Activated naive CD8-positive, alpha-beta T cell treated with anti-CD3 and anti-CD28 coated beads, Interleukin-2, amount 10 ng/mL, durations not matched to agents 7 days and 5 days (primary cell): ENCODE measurements at regions of chr10 and their contacts with region 1.

Region 1: GRCh38 chr10:96129387-96130325 is at the start of gene ZNF518A:
- DNase-seq: peak; percentile 90
- ATAC-seq: peak; percentile 86
- H3K4me3 Mint-ChIP-seq: peak within 1 kb of the TSS; percentile 96
- H3K27ac Mint-ChIP-seq: peak within 1 kb of the TSS; percentile 98
- H3K4me1 Mint-ChIP-seq: peaks cover 22% of the 10 kb centered on the region
- H3K27me3 Mint-ChIP-seq: peaks cover 34% of the 10 kb centered on the region
- total RNA-seq, gene ZNF518A: 22.0 to 22.7 TPM

Region 2: DNA sequence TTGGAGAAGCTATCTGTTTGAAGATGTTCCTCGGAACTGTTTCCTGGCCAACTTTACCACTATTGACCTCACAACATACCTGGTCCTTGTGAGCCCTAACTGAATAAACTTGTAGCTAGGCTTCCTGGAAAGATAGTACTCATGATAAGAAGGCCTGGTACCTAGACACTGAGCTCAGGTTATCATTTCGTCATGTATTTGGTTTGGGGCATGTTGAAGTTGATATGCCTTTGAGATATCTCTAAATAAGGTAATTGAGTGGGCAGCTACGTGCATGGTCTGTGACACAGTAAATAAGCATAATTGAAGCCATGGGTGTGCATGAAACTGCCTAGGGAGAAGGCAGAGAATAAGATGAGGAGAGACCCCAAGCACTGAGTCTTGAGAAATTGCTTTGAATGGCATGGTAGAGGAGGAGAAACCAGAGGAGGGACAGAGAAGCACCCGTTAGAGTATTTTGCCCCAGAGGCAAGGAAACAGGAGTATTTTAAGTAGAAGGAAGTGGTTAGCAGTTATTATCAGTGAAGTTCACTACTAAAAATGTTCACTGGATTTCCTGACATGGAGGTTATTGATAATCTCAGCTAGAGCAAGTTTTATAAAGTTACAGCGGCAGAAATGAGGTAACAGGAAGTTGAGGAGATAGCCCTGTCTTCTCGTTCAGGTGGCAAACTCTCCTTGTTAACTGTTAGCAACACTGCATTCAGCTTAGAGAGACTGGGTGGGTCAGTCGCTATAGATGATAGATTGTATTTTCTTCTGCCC is 166.2 kb before region 1 on chr10:
- POLR2A ChIA-PET with region 1: no interaction called
- DNase-seq: no peak
- ATAC-seq: peak; percentile 76
- H3K4me3 Mint-ChIP-seq: peak overlapping the region; percentile 53
- H3K27ac Mint-ChIP-seq: peak overlapping the region; percentile 83
- H3K4me1 Mint-ChIP-seq: peaks cover 11% of the 10 kb centered on the region
- H3K27me3 Mint-ChIP-seq: no peaks in the 10 kb centered on the region

Region 3: GRCh38 chr10:96089670-96090462 is 39.8 kb before region 1 on chr10:
- POLR2A ChIA-PET with region 1: interaction called, 184 read pairs
- DNase-seq: peak; percentile 94
- ATAC-seq: peak; percentile 93
- H3K4me3 Mint-ChIP-seq: peak overlapping the region; percentile 95
- H3K27ac Mint-ChIP-seq: peak overlapping the region; percentile 99
- H3K4me1 Mint-ChIP-seq: peaks cover 9% of the 10 kb centered on the region
- H3K27me3 Mint-ChIP-seq: peaks cover 18% of the 10 kb centered on the region

Region 4: GRCh38 chr10:96325719-96326373 is 196.2 kb after region 1 on chr10:
- POLR2A ChIA-PET with region 1: no interaction called
- DNase-seq: no peak
- ATAC-seq: no peak
- H3K4me3 Mint-ChIP-seq: no peak overlapping the region
- H3K27ac Mint-ChIP-seq: no peak overlapping the region
- H3K4me1 Mint-ChIP-seq: peaks cover 3% of the 10 kb centered on the region
- H3K27me3 Mint-ChIP-seq: peaks cover 13% of the 10 kb centered on the region